Activated naive CD8-positive, alpha-beta T cell treated with anti-CD3 and anti-CD28 coated beads, Interleukin-2, amount 10 ng/mL, durations not matched to agents 7 days and 5 days (primary cell): ENCODE measurements at regions of chr11 and their contacts with region 1.

Region 1: DNA sequence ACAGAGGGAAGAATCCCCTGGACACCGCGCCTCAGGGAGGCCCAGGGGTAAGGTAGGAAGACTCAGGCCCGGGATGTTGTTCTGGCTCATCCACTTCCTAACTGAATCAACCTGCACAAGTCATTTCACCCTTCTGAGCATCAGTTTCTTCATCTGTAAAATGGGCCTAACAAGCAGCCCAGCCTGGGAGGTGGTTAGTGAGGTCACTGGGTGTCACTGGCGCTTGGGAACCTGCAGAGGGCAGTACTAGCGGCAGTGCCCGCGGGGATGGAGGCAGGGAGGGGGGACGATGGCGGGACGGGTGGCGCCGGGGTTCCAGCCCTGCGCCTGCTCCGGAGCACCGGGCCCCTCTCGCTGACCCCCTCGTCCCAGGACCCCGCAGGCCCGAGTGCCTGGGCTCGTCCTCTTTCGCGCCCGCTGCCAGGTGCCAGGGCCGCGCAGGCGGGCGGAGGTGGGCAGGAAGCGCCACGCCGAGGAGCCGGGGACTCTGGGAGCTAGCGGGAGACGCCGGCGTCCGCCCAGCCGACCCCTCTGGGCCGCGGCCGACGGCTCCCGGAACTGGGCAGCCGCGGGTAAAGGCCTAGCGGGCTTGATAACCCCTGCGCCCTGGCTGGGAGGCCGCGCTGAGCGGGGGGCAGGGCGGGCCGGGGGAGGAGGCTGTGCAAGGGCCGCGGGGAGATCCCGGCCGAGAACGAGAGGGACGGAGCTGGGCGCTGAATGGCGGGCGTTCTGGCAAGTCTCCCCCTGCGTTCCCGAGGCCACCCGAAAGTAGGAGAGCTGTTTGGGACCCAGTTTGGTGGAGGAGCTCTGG is at the start of gene NLRX1:
- DNase-seq: peak; percentile 84
- ATAC-seq: peak; percentile 89
- H3K4me3 Mint-ChIP-seq: peak within 1 kb of the TSS; percentile 92
- H3K27ac Mint-ChIP-seq: peak within 1 kb of the TSS; percentile 94
- H3K4me1 Mint-ChIP-seq: peaks cover 19% of the 10 kb centered on the region
- H3K27me3 Mint-ChIP-seq: no peaks in the 10 kb centered on the region
- total RNA-seq, gene NLRX1: 20.7 to 25.2 TPM

Region 2: GRCh38 chr11:119121008-119121810 is 47.5 kb before region 1 on chr11 and contains the start of gene HINFP:
- POLR2A ChIA-PET with region 1: interaction called, 22 read pairs
- DNase-seq: peak; percentile 97
- ATAC-seq: peak; percentile 97
- H3K4me3 Mint-ChIP-seq: peak within 1 kb of the TSS; percentile 93
- H3K27ac Mint-ChIP-seq: peak within 1 kb of the TSS; percentile 86
- H3K4me1 Mint-ChIP-seq: peaks cover 25% of the 10 kb centered on the region
- H3K27me3 Mint-ChIP-seq: no peaks in the 10 kb centered on the region
- total RNA-seq, gene HINFP: 52.4 to 52.6 TPM

Region 3: GRCh38 chr11:119181677-119182412 is 13.2 kb after region 1 on chr11:
- POLR2A ChIA-PET with region 1: interaction called, 18 read pairs
- DNase-seq: no peak
- ATAC-seq: no peak
- H3K4me3 Mint-ChIP-seq: no peak overlapping the region
- H3K27ac Mint-ChIP-seq: no peak overlapping the region
- H3K4me1 Mint-ChIP-seq: peaks cover 9% of the 10 kb centered on the region
- H3K27me3 Mint-ChIP-seq: no peaks in the 10 kb centered on the region

Region 4: GRCh38 chr11:119295178-119295577 is 126.5 kb after region 1 on chr11:
- POLR2A ChIA-PET with region 1: no interaction called
- DNase-seq: no peak
- ATAC-seq: no peak
- H3K4me3 Mint-ChIP-seq: no peak overlapping the region
- H3K27ac Mint-ChIP-seq: no peak overlapping the region
- H3K4me1 Mint-ChIP-seq: no peaks in the 10 kb centered on the region
- H3K27me3 Mint-ChIP-seq: no peaks in the 10 kb centered on the region